ENCODE measurements at regions of chr14 and their contacts with region 1.

Region 1: DNA sequence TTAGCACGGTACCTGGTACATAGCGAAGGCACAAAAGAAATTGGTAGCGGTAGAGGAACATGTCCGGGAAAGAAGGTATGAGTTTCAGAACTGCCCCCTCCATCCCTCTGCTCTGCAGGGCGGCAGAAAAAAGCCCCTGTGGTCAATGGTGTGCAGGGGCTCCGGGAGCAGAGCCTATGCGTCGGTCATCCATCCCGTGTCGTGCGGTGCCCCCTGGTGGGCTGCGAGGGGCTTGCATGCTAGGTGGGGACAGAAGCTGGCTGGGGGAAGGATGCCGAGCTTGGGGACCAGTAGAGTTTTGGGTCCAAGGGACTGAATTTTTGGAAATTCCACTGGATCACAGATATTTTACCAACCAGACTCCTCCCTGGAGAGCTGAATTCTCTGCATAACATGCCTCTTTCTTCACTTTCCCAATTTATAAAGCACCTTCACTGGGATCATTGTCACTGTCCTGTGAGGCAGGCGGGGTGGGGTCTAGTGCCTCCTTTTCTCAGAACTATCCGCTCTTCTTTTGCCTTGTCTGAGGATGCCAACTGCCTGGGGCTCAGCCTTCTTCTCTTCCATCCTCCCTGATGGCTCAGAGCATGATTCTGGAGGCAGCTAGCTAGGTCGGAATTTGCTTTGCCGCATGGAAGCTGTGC is 148.7 kb downstream of the SMOC1 start:
- DNase-seq: peak in 4 of 5 donors; percentile 14 to 47 (median 22)
- H3K4me3 ChIP-seq: no peak overlapping the region
- H3K4me3 Mint-ChIP-seq: no peak overlapping the region
- H3K27ac ChIP-seq: no peak overlapping the region
- H3K27ac Mint-ChIP-seq: no peak overlapping the region
- H3K4me1 ChIP-seq: no peaks in the 10 kb centered on the region
- H3K4me1 Mint-ChIP-seq: peaks cover 0 to 4% (median under 1%) of the 10 kb centered on the region in 4 donors
- H3K27me3 ChIP-seq: no peaks in the 10 kb centered on the region
- H3K27me3 Mint-ChIP-seq: peaks cover 2 to 15% of the 10 kb centered on the region in 2 donors

Region 2: GRCh38 chr14:69818757-69819191 is 209.1 kb before region 1 on chr14:
- CTCF ChIA-PET with region 1: interaction called, 35 read pairs
- POLR2A ChIA-PET with region 1: no interaction called
- intact Hi-C with region 1: no loop called
- DNase-seq: peak; percentile 50 to 70 (median 58)
- H3K4me3 ChIP-seq: no peak overlapping the region
- H3K4me3 Mint-ChIP-seq: no peak overlapping the region
- H3K27ac ChIP-seq: no peak overlapping the region
- H3K27ac Mint-ChIP-seq: peak overlapping the region in 1 of 7 donors; percentile 19
- H3K4me1 ChIP-seq: no peaks in the 10 kb centered on the region
- H3K4me1 Mint-ChIP-seq: peaks cover 0 to 4% (median 2%) of the 10 kb centered on the region in 4 donors
- H3K27me3 ChIP-seq: no peaks in the 10 kb centered on the region
- H3K27me3 Mint-ChIP-seq: peaks cover 4 to 7% of the 10 kb centered on the region in 2 donors

Region 3: GRCh38 chr14:70086685-70087379 is 58.9 kb after region 1 on chr14:
- CTCF ChIA-PET with region 1: no interaction called
- POLR2A ChIA-PET with region 1: no interaction called
- intact Hi-C with region 1: no loop called
- DNase-seq: no peak
- H3K4me3 ChIP-seq: no peak overlapping the region
- H3K4me3 Mint-ChIP-seq: no peak overlapping the region
- H3K27ac ChIP-seq: no peak overlapping the region
- H3K27ac Mint-ChIP-seq: no peak overlapping the region
- H3K4me1 ChIP-seq: no peaks in the 10 kb centered on the region
- H3K4me1 Mint-ChIP-seq: no peaks in the 10 kb centered on the region
- H3K27me3 ChIP-seq: no peaks in the 10 kb centered on the region
- H3K27me3 Mint-ChIP-seq: peaks cover 14 to 25% of the 10 kb centered on the region in 2 donors

Measured in CD4-positive, alpha-beta memory T cell (primary cell).